ENCODE measurements at regions of chr9 and their contacts with region 1.

Region 1: DNA sequence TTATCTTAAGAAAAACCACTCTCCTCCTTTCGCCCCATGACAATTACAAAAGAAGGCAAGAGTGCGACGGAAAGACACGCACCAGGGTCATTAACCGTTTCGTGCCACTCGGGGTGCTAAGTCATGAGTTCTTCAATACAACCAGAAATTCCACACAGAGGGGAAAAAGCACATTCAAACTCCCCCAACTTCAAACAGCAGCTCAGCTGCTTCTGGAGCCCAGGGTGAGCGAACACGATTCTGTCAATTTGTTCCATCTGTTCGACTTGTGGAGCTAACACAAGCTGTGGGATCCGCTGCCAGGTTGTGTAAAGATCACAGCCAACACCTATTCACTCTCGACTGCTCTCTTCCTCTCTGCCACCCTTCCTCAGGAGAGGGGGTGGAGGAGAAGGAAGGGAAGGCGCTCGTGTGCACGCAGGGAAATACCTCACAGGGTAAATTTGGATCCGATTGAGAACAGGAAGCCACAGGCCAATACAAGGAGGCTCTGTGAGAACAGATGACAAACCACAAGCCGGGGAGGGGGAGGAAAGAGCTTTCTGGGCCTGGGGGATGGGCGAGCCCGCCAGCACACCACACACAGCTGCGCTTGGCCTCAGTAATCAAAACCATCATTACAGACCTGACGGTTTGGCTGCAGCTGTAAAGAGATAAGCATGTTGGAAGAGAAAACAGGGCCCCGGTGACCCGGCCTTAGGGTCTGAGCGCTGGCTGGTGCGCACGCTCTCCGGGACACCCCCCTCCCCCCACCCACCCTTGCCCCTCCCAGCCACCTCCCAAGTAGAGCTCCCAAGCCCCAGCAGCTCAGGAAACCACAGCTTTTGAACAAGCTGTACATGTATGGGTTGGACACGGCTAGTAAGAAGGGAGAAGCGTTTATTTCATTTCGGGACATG is 54.3 kb downstream of the PTCH1 start:
- DNase-seq: peak; percentile 64 to 86 (median 83)
- H3K4me3 ChIP-seq: peak overlapping the region; percentile 2 to 65 (median 45)
- H3K27ac ChIP-seq: peak overlapping the region; percentile 46 to 94 (median 85)
- H3K27me3 ChIP-seq: no peaks in the 10 kb centered on the region
- CTCF ChIP-seq: peak in 10 of 56 donors; percentile 11 to 26 (median 16)

Region 2: GRCh38 chr9:95477441-95477840 is 14.9 kb after region 1 on chr9:
- intact Hi-C with region 1: loop called in 1 of 2 experiments (anchors 2 kb)
- DNase-seq: peak; percentile 66 to 97 (median 90)
- H3K4me3 ChIP-seq: peak overlapping the region in 24 of 59 donors; percentile 3 to 47 (median 20)
- H3K27ac ChIP-seq: peak overlapping the region; percentile 23 to 96 (median 87)
- H3K27me3 ChIP-seq: no peaks in the 10 kb centered on the region
- CTCF ChIP-seq: peak in 14 of 56 donors; percentile 11 to 51 (median 22)

Measured in dorsolateral prefrontal cortex (tissue), 120 donors.